ENCODE measurements at regions of chr10 and their contacts with region 1.

Region 1: GRCh38 chr10:6068422-6068821 is 6.3 kb upstream of the IL2RA start:
- DNase-seq: peak; percentile 66
- H3K4me3 Mint-ChIP-seq: peak overlapping the region; percentile 71
- H3K27ac Mint-ChIP-seq: peak overlapping the region; percentile 96
- H3K4me1 Mint-ChIP-seq: peaks cover 92% of the 10 kb centered on the region
- H3K27me3 Mint-ChIP-seq: peaks cover 2% of the 10 kb centered on the region

Region 2: GRCh38 chr10:5317547-5318107 is 750.8 kb before region 1 on chr10:
- CTCF ChIA-PET with region 1: no interaction called
- POLR2A ChIA-PET with region 1: no interaction called
- intact Hi-C with region 1: loop called (anchors 5 kb)
- DNase-seq: peak; percentile 94
- H3K4me3 Mint-ChIP-seq: peak overlapping the region; percentile 55
- H3K27ac Mint-ChIP-seq: peak overlapping the region; percentile 92
- H3K4me1 Mint-ChIP-seq: peaks cover 76% of the 10 kb centered on the region
- H3K27me3 Mint-ChIP-seq: no peaks in the 10 kb centered on the region

Region 3: GRCh38 chr10:6045314-6045848 is 23.0 kb before region 1 on chr10:
- CTCF ChIA-PET with region 1: interaction called, 7 read pairs
- POLR2A ChIA-PET with region 1: interaction called, 343 read pairs
- intact Hi-C with region 1: loop called (anchors 1 kb)
- DNase-seq: peak; percentile 67
- H3K4me3 Mint-ChIP-seq: peak overlapping the region; percentile 67
- H3K27ac Mint-ChIP-seq: peak overlapping the region; percentile 94
- H3K4me1 Mint-ChIP-seq: peaks cover 93% of the 10 kb centered on the region
- H3K27me3 Mint-ChIP-seq: no peaks in the 10 kb centered on the region

Region 4: GRCh38 chr10:6083523-6084475 is 15.4 kb after region 1 on chr10:
- CTCF ChIA-PET with region 1: interaction called, 112 read pairs
- POLR2A ChIA-PET with region 1: interaction called, 157 read pairs
- intact Hi-C with region 1: no loop called
- DNase-seq: peak; percentile 87
- H3K4me3 Mint-ChIP-seq: peak overlapping the region; percentile 71
- H3K27ac Mint-ChIP-seq: peak overlapping the region; percentile 94
- H3K4me1 Mint-ChIP-seq: peaks cover 65% of the 10 kb centered on the region
- H3K27me3 Mint-ChIP-seq: no peaks in the 10 kb centered on the region

Region 5: GRCh38 chr10:6136215-6137201 is 68.1 kb after region 1 on chr10:
- CTCF ChIA-PET with region 1: no interaction called
- POLR2A ChIA-PET with region 1: interaction called, 3 read pairs
- intact Hi-C with region 1: loop called (anchors 2 kb)
- DNase-seq: peak; percentile 88
- H3K4me3 Mint-ChIP-seq: peak overlapping the region; percentile 52
- H3K27ac Mint-ChIP-seq: peak overlapping the region; percentile 82
- H3K4me1 Mint-ChIP-seq: peaks cover 63% of the 10 kb centered on the region
- H3K27me3 Mint-ChIP-seq: peaks cover 10% of the 10 kb centered on the region

Measured in activated CD4-positive, alpha-beta memory T cell treated with anti-CD3 and anti-CD28 coated beads for 36 hours (primary cell).